IMR-90 (cell line): ENCODE measurements at regions of chr16 and their contacts with region 1.

Region 1: DNA sequence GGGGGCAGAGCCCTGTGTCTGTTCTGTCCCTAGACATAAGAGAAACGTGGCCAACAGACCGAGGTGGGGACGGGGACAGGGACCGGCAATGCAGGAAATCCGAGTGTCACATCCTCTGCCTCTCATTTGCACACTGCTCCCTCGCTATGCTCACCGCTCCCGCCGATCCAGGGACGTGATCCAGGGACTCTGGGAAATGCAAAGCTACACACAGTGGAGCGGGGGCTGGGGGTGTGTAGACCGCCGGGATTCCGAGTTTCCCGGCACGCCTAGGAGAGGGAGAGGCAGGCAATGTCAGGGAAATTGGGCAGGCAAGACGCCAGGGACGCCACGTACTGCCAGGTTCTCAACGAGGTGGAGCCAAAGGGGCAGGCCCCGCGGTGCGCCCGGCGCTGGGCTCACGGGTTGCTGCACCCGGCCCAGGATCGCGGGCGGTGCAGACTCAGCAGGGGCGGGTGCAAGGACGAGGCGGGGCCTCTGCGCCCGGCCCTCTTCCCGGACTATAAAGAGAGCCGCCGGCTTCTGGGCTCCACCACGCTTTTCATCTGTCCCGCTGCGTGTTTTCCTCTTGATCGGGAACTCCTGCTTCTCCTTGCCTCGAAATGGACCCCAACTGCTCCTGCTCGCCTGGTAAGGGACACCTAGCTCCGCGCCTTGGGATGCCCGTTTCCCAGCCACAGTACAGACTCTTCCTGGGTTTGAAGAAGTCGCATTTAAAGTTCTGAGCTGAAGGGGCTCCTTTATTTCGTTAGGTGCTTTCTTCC is at the start of gene MT1X:
- DNase-seq: peak; percentile 77
- ATAC-seq: peak; percentile 99
- H3K4me3 ChIP-seq: peak within 1 kb of the TSS; percentile 58
- H3K27ac ChIP-seq: peak within 1 kb of the TSS; percentile 50
- H3K4me1 ChIP-seq: peaks cover 7% of the 10 kb centered on the region; the same call in 1 of the 2 replicates
- H3K27me3 ChIP-seq: peaks cover 7% of the 10 kb centered on the region
- CTCF ChIP-seq: no peak
- POLR2A ChIP-seq: peak; percentile 91
- RAD21 ChIP-seq: no peak
- total RNA-seq, gene MT1X: 5.6 and 37.2 TPM in 2 replicates

Region 2: DNA sequence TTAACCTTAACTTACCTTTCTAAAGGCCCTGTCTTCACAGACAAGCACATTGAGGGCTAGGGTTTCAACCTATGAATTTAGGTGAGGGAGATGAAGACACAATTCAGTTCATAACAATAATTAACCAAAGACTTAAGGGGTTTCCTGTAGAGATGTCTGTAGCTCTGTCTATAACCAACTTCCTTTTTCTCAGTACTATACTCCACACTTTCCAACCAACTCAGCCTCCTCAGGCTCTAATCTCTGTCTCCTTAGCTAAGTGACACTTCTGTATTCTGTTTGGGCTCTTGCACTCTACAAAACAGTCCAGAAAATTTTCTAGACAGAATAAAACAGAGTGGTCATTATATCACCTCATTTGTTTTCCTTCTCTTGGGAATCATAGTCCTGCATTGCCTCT is 1089.8 kb before region 1 on chr16:
- CTCF ChIA-PET with region 1: no interaction called
- POLR2A ChIA-PET with region 1: no interaction called
- dilution Hi-C with region 1: no loop called
- in situ Hi-C with region 1: no loop called
- intact Hi-C with region 1: no loop called
- DNase-seq: no peak
- ATAC-seq: no peak
- H3K4me3 ChIP-seq: no peak overlapping the region
- H3K27ac ChIP-seq: no peak overlapping the region
- H3K4me1 ChIP-seq: no peaks in the 10 kb centered on the region
- H3K27me3 ChIP-seq: no peaks in the 10 kb centered on the region; the same call in 1 of the 2 replicates
- CTCF ChIP-seq: no peak
- POLR2A ChIP-seq: no peak
- RAD21 ChIP-seq: no peak

Region 3: GRCh38 chr16:56608043-56608875 is 73.9 kb before region 1 on chr16 and contains the start of gene MT2A:
- CTCF ChIA-PET with region 1: no interaction called
- POLR2A ChIA-PET with region 1: no interaction called
- dilution Hi-C with region 1: no loop called
- in situ Hi-C with region 1: no loop called
- intact Hi-C with region 1: loop called (anchors 5 kb)
- DNase-seq: peak; percentile 97
- ATAC-seq: peak; percentile 59
- H3K4me3 ChIP-seq: peak within 1 kb of the TSS; percentile 72
- H3K27ac ChIP-seq: peak within 1 kb of the TSS; percentile 99
- H3K4me1 ChIP-seq: peaks cover 30% of the 10 kb centered on the region
- H3K27me3 ChIP-seq: no peaks in the 10 kb centered on the region
- CTCF ChIP-seq: no peak
- POLR2A ChIP-seq: peak; percentile 96
- RAD21 ChIP-seq: no peak
- total RNA-seq, gene MT2A: 25.5 and 55.5 TPM in 2 replicates

Region 4: GRCh38 chr16:56625140-56625942 is 56.8 kb before region 1 on chr16 and contains the start of gene MT1E:
- CTCF ChIA-PET with region 1: no interaction called
- POLR2A ChIA-PET with region 1: no interaction called
- dilution Hi-C with region 1: no loop called
- in situ Hi-C with region 1: no loop called
- intact Hi-C with region 1: loop called (anchors 5 kb)
- DNase-seq: peak; percentile 76
- ATAC-seq: peak; percentile 91
- H3K4me3 ChIP-seq: peak within 1 kb of the TSS; percentile 51
- H3K27ac ChIP-seq: peak within 1 kb of the TSS; percentile 85
- H3K4me1 ChIP-seq: peaks cover 17% of the 10 kb centered on the region
- H3K27me3 ChIP-seq: no peaks in the 10 kb centered on the region
- CTCF ChIP-seq: no peak
- POLR2A ChIP-seq: peak; percentile 95
- RAD21 ChIP-seq: no peak
- total RNA-seq, gene MT1E: 137 and 166 TPM in 2 replicates

Region 5: DNA sequence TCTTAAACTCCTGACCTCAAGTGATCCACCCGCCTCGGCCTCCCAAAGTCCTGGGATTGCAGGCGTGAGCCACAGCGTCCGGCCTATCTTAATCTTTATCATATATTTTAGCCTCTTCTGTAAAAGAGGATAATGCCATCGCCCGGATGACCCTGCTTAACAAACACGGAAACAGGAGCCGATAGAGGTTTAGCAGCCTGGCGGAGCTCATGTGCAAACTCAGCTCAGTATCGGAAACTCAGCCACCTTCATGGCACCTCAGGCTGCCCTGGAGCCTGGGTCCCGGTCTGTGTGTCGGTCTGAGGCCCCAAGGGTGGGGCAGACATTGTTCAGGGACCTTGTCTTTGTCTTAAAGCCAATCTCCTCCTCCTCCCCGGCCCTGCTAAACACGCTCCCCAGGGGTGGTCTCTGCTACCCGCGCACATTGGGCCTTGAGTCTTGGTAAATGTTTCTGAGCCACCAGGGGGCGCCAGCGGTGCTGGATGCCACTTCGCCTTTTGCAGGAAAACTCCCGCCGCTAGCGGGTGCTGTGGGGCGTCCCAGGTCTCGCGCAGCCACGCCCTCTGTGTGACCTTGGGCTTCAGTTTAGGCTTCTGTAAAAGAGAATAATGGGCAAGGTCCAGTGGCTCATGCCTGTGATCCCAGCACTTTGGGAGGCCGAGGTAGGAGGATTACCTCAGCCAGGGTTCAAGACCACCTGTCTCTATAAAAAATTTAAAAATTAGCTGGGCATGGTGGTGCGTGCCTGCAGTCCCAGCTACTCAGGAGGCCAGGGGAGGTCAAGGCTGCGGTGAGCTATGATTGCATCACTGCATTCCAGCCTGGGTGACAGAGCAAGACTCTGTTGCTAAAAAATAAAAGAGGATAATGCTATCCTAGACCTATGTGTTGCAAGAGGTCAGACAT is 282.4 kb after region 1 on chr16:
- CTCF ChIA-PET with region 1: no interaction called
- POLR2A ChIA-PET with region 1: no interaction called
- dilution Hi-C with region 1: no loop called
- in situ Hi-C with region 1: no loop called
- intact Hi-C with region 1: no loop called
- DNase-seq: peak; percentile 84
- ATAC-seq: peak; percentile 86
- H3K4me3 ChIP-seq: no peak overlapping the region
- H3K27ac ChIP-seq: peak overlapping the region; percentile 4; the same call in 1 of the 2 replicates
- H3K4me1 ChIP-seq: peaks cover 32% of the 10 kb centered on the region
- H3K27me3 ChIP-seq: no peaks in the 10 kb centered on the region
- CTCF ChIP-seq: peak; percentile 61
- POLR2A ChIP-seq: no peak
- RAD21 ChIP-seq: peak; percentile 45